Heart right ventricle (tissue), 16 donors: ENCODE measurements at regions of chr10 and their contacts with region 1.

Region 1: GRCh38 chr10:131865223-131865917 is 35.4 kb upstream of the PPP2R2D start:
- DNase-seq: no peak
- ATAC-seq: no peak
- H3K4me3 ChIP-seq: no peak overlapping the region
- H3K27ac ChIP-seq: no peak overlapping the region
- H3K4me1 ChIP-seq: no peaks in the 10 kb centered on the region
- H3K27me3 ChIP-seq: peaks cover 0 to 76% (median 38%) of the 10 kb centered on the region in 7 donors
- CTCF ChIP-seq: no peak

Region 2: GRCh38 chr10:130190055-130190736 is 1675.2 kb before region 1 on chr10:
- intact Hi-C with region 1: loop called in 5 of 10 experiments (anchors 5 to 10 kb)
- DNase-seq: peak; percentile 85 to 90
- ATAC-seq: peak; percentile 84 to 93 (median 88)
- H3K4me3 ChIP-seq: peak overlapping the region; percentile 23 to 68 (median 64)
- H3K27ac ChIP-seq: peak overlapping the region in 2 of 10 donors; percentile 34 to 42
- H3K4me1 ChIP-seq: peaks cover 3 to 23% (median 8%) of the 10 kb centered on the region in 9 donors
- H3K27me3 ChIP-seq: peaks cover 0 to 15% (median 0%) of the 10 kb centered on the region in 7 donors
- CTCF ChIP-seq: peak; percentile 100

Region 3: DNA sequence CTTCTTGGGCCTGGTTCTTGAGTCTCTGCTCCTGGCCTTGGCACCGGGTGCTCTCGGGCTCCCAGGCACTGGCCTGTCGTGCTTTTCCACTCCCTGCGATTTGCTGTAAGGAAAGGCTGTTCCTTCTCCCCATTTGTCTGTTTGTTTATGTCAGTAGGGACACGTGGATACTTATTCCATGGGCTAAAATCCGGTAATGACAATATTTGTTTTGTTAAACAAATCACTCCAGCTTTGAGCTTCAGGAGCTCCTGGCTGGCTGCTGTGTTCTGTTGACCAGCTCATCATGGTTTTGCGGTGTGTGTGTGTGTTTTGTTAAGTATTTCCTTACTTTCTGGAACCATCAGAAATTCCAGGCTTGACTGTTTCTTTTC is 182.9 kb after region 1 on chr10:
- intact Hi-C with region 1: no loop called
- DNase-seq: no peak
- ATAC-seq: no peak
- H3K4me3 ChIP-seq: no peak overlapping the region
- H3K27ac ChIP-seq: no peak overlapping the region
- H3K4me1 ChIP-seq: no peaks in the 10 kb centered on the region
- H3K27me3 ChIP-seq: peaks cover 0 to 20% (median 13%) of the 10 kb centered on the region in 7 donors
- CTCF ChIP-seq: no peak